ENCODE measurements at regions of chr4 and their contacts with region 1.

Region 1: GRCh38 chr4:109826719-109827118 is 1.1 kb upstream of the RRH start:
- DNase-seq: no peak
- H3K4me3 ChIP-seq: no peak overlapping the region
- H3K27ac ChIP-seq: no peak overlapping the region
- H3K4me1 ChIP-seq: no peaks in the 10 kb centered on the region
- H3K27me3 ChIP-seq: no peaks in the 10 kb centered on the region
- CTCF ChIP-seq: peak in 2 of 3 donors; percentile 36 to 48
- EP300 ChIP-seq: no peak
- POLR2A ChIP-seq: no peak

Region 2: GRCh38 chr4:109321232-109321631 is 505.5 kb before region 1 on chr4:
- intact Hi-C with region 1: no loop called
- DNase-seq: no peak
- H3K4me3 ChIP-seq: no peak overlapping the region
- H3K27ac ChIP-seq: no peak overlapping the region
- H3K4me1 ChIP-seq: no peaks in the 10 kb centered on the region
- H3K27me3 ChIP-seq: no peaks in the 10 kb centered on the region
- CTCF ChIP-seq: no peak
- EP300 ChIP-seq: no peak
- POLR2A ChIP-seq: no peak

Region 3: GRCh38 chr4:109702950-109703663 is 123.6 kb before region 1 on chr4 and contains the start of gene CASP6:
- intact Hi-C with region 1: loop called in 1 of 4 experiments (anchors 10 kb)
- DNase-seq: peak; percentile 83 to 90 (median 84)
- H3K4me3 ChIP-seq: peak within 1 kb of the TSS; percentile 88
- H3K27ac ChIP-seq: peak within 1 kb of the TSS; percentile 63 to 68
- H3K4me1 ChIP-seq: peaks cover 5% of the 10 kb centered on the region
- H3K27me3 ChIP-seq: no peaks in the 10 kb centered on the region
- CTCF ChIP-seq: peak; percentile 23 to 63 (median 57)
- EP300 ChIP-seq: no peak
- POLR2A ChIP-seq: no peak
- total RNA-seq, gene CASP6: 11.2 to 19.3 (median 13.1) TPM